ENCODE measurements at regions of chr7 and their contacts with region 1.

Region 1: GRCh38 chr7:140062528-140063299 is at the start of gene PARP12:
- DNase-seq: peak; percentile 77 to 86 (median 83)
- ATAC-seq: peak; percentile 91
- H3K4me3 ChIP-seq: peak within 1 kb of the TSS; percentile 79
- H3K4me3 Mint-ChIP-seq: peak within 1 kb of the TSS; percentile 79 to 94 (median 90)
- H3K27ac ChIP-seq: peak within 1 kb of the TSS; percentile 81
- H3K27ac Mint-ChIP-seq: peak within 1 kb of the TSS; percentile 83 to 95 (median 92)
- H3K4me1 ChIP-seq: peaks cover 32 to 38% of the 10 kb centered on the region in 2 donors
- H3K4me1 Mint-ChIP-seq: peaks cover 34 to 55% (median 48%) of the 10 kb centered on the region in 7 donors
- H3K27me3 ChIP-seq: no peaks in the 10 kb centered on the region
- H3K27me3 Mint-ChIP-seq: peaks cover 0 to 7% (median 0%) of the 10 kb centered on the region in 5 donors
- total RNA-seq, gene PARP12: 66.2 to 145 (median 94.5) TPM

Region 2: DNA sequence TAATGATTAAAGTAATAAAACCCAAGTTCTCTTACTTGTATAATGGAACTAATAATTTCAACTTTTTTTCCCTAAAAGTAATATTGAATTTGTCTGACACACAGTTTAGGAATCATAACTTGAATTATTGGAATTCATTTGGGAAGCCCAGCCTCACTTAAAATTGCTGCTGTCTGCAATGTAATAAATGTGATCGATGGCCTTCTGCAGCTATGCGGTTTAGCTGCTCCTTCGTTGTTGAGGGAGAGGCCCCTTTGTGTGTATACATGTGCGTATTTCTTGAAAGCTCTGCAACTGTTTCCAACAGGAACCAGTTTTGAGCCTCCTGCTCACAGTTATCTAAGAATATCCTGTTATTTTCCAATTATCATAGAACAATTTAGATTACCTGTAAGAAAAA is 1833.9 kb before region 1 on chr7:
- CTCF ChIA-PET with region 1: no interaction called
- POLR2A ChIA-PET with region 1: no interaction called
- intact Hi-C with region 1: no loop called
- DNase-seq: no peak
- ATAC-seq: no peak
- H3K4me3 ChIP-seq: no peak overlapping the region
- H3K4me3 Mint-ChIP-seq: no peak overlapping the region
- H3K27ac ChIP-seq: no peak overlapping the region
- H3K27ac Mint-ChIP-seq: no peak overlapping the region
- H3K4me1 ChIP-seq: no peaks in the 10 kb centered on the region
- H3K4me1 Mint-ChIP-seq: peaks cover 0 to 4% (median 0%) of the 10 kb centered on the region in 7 donors
- H3K27me3 ChIP-seq: no peaks in the 10 kb centered on the region
- H3K27me3 Mint-ChIP-seq: peaks cover 0 to 16% (median 12%) of the 10 kb centered on the region in 5 donors

Region 3: DNA sequence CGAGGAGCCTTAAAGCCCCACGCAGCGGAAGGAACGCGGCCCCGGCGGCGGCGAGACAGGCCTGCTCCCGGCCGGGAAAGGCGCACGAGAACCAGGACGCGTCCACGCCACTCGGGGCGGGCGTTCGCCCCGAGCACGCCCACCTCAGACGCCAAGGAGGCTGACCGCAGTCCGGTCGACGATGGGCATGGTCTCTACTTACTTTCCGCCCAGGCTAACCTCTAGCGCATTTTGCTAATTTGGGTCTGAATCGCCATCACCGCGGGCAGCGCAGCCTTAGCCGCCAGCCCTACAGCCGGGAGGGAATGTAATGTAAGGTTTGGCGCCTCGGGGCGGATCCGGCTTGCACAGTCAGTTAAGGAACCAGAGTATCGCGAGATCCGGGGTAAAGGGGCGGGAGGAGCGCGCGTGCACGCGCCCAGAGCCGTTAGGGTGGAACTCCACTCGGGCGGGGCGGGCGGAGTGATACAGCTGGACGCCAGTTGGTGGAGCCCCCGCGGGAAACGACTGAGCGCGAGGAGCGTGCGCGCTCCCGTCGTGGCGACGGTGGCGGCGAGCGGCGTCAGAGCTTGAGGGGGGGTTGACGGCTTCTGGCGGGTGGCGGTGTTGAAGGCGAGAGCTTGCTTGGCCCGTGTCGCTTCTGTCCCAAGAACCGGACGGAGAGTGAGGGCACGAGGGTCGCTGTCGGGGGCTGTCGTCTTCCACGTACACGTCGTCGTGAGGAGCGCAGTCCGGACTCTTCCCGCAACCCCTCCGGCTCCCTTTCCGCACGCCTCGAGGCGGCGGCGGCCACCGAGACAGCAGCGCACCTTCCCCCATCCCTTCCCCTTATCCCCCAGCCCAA is 703.1 kb before region 1 on chr7 and contains the start of gene LUC7L2:
- CTCF ChIA-PET with region 1: no interaction called
- POLR2A ChIA-PET with region 1: no interaction called
- intact Hi-C with region 1: loop called in 1 of 2 experiments (anchors 5 kb)
- DNase-seq: peak; percentile 96 to 100 (median 99)
- ATAC-seq: peak; percentile 91
- H3K4me3 ChIP-seq: peak within 1 kb of the TSS; percentile 80
- H3K4me3 Mint-ChIP-seq: peak within 1 kb of the TSS; percentile 93 to 100 (median 99)
- H3K27ac ChIP-seq: peak within 1 kb of the TSS; percentile 97
- H3K27ac Mint-ChIP-seq: peak within 1 kb of the TSS; percentile 95 to 100 (median 98)
- H3K4me1 ChIP-seq: peaks cover 10 to 27% of the 10 kb centered on the region in 2 donors
- H3K4me1 Mint-ChIP-seq: peaks cover 21 to 60% (median 45%) of the 10 kb centered on the region in 7 donors
- H3K27me3 ChIP-seq: no peaks in the 10 kb centered on the region
- H3K27me3 Mint-ChIP-seq: no peaks in the 10 kb centered on the region
- total RNA-seq, gene LUC7L2: 116 to 183 (median 150) TPM

Region 4: DNA sequence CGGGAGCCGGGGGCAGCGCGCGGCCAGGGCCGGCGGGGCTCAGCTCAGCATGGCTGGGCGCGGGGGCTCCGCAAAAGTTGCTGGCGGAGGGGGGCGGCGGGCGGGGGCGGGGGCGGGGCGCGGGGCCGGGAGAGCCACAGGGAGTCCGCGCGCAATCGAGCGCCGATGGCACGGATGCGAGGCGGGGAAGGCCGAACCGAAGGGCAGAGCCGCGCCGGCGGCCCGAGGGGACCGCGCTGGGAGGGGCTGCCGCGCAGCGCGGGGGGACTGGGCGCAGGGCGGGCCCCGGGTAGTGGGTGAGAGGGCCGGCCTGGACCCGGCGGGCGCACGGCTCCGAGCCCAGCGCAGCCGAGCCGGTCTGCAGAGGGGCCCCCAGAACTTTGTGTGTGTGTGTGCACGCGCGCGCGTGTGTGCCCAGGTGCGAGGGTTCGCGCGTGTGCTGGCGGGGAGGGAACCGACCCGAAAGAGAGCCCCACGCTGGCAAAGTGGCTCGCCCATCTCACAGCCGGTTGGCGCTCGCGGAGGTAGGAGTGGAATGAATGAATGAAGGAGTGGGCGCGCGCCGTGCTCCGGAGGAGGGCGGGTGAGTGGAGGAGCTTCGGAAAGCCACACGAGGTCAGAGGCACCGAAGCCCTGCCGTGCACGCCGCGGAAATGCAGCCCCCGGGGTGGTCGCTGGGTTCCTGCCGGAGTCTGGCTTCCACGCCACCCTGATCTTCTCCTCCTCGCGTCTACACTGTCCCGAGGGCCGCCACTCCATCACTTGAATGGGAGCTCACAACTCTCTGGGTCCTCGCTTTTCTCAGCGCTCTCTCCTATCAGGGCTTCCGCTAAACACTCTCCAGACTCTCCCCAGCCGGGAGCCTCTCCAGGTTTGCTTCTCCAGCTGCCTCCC is 284.5 kb before region 1 on chr7 and contains the start of gene HIPK2:
- CTCF ChIA-PET with region 1: no interaction called
- POLR2A ChIA-PET with region 1: no interaction called
- intact Hi-C with region 1: loop called in 1 of 2 experiments (anchors 1 kb)
- DNase-seq: peak; percentile 54 to 75 (median 67)
- ATAC-seq: peak; percentile 79
- H3K4me3 ChIP-seq: peak within 1 kb of the TSS; percentile 85
- H3K4me3 Mint-ChIP-seq: peak within 1 kb of the TSS; percentile 94 to 100 (median 98)
- H3K27ac ChIP-seq: peak within 1 kb of the TSS; percentile 89
- H3K27ac Mint-ChIP-seq: peak within 1 kb of the TSS; percentile 95 to 98 (median 97)
- H3K4me1 ChIP-seq: peaks cover 4 to 26% of the 10 kb centered on the region in 2 donors
- H3K4me1 Mint-ChIP-seq: peaks cover 41 to 53% (median 49%) of the 10 kb centered on the region in 7 donors
- H3K27me3 ChIP-seq: no peaks in the 10 kb centered on the region
- H3K27me3 Mint-ChIP-seq: peaks cover 0 to 24% (median 5%) of the 10 kb centered on the region in 5 donors
- total RNA-seq, gene HIPK2: 27.3 to 44.0 (median 37.3) TPM

Region 5: DNA sequence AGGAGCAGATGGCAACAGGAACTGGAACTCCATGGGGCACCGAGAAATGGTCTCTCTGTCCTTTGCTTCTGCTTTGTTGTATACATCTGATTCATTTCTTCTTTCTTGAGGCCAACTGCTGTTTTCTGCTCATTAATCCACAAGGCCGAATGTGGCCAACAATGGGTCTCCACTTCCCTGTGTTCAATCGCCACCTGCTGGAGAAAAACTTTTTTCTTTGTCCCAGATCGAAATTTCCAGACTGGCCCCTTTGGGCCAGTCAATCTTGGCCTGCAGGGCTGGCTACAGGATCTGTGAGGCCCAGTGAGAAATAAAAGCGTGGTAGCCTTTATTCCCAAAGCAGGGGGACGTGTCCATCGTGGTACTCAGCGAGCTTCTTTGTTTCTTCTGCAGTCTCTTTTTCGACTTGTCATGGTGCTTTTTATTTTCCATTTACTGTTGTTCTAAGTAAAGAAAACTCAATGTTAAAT is 58.8 kb before region 1 on chr7:
- CTCF ChIA-PET with region 1: no interaction called
- POLR2A ChIA-PET with region 1: no interaction called
- intact Hi-C with region 1: no loop called
- DNase-seq: peak in 7 of 9 donors; percentile 17 to 42 (median 33)
- ATAC-seq: peak; percentile 37
- H3K4me3 ChIP-seq: no peak overlapping the region
- H3K4me3 Mint-ChIP-seq: no peak overlapping the region
- H3K27ac ChIP-seq: no peak overlapping the region
- H3K27ac Mint-ChIP-seq: peak overlapping the region in 1 of 9 donors; percentile 80
- H3K4me1 ChIP-seq: no peaks in the 10 kb centered on the region
- H3K4me1 Mint-ChIP-seq: peaks cover 0 to 6% (median 0%) of the 10 kb centered on the region in 7 donors
- H3K27me3 ChIP-seq: no peaks in the 10 kb centered on the region
- H3K27me3 Mint-ChIP-seq: no peaks in the 10 kb centered on the region

Region 6: GRCh38 chr7:140022582-140023211 is 40.0 kb before region 1 on chr7:
- CTCF ChIA-PET with region 1: no interaction called
- POLR2A ChIA-PET with region 1: no interaction called
- intact Hi-C with region 1: no loop called
- DNase-seq: no peak
- ATAC-seq: no peak
- H3K4me3 ChIP-seq: no peak overlapping the region
- H3K4me3 Mint-ChIP-seq: no peak overlapping the region
- H3K27ac ChIP-seq: no peak overlapping the region
- H3K27ac Mint-ChIP-seq: peak overlapping the region in 2 of 9 donors; percentile 51 to 68
- H3K4me1 ChIP-seq: no peaks in the 10 kb centered on the region
- H3K4me1 Mint-ChIP-seq: peaks cover 0 to 2% (median 0%) of the 10 kb centered on the region in 7 donors
- H3K27me3 ChIP-seq: no peaks in the 10 kb centered on the region
- H3K27me3 Mint-ChIP-seq: no peaks in the 10 kb centered on the region

Region 7: GRCh38 chr7:140304191-140304799 is 241.6 kb after region 1 on chr7:
- CTCF ChIA-PET with region 1: no interaction called
- POLR2A ChIA-PET with region 1: no interaction called
- intact Hi-C with region 1: loop called (anchors 5 to 10 kb)
- DNase-seq: peak in 8 of 9 donors; percentile 30 to 75 (median 58)
- ATAC-seq: peak; percentile 93
- H3K4me3 ChIP-seq: no peak overlapping the region
- H3K4me3 Mint-ChIP-seq: peak overlapping the region in 1 of 10 donors; percentile 12
- H3K27ac ChIP-seq: no peak overlapping the region
- H3K27ac Mint-ChIP-seq: peak overlapping the region; percentile 3 to 81 (median 62)
- H3K4me1 ChIP-seq: no peaks in the 10 kb centered on the region
- H3K4me1 Mint-ChIP-seq: peaks cover 0 to 7% (median 6%) of the 10 kb centered on the region in 7 donors
- H3K27me3 ChIP-seq: no peaks in the 10 kb centered on the region
- H3K27me3 Mint-ChIP-seq: no peaks in the 10 kb centered on the region

Region 8: GRCh38 chr7:140342727-140343514 is 280.2 kb after region 1 on chr7:
- CTCF ChIA-PET with region 1: no interaction called
- POLR2A ChIA-PET with region 1: no interaction called
- intact Hi-C with region 1: no loop called
- DNase-seq: no peak
- ATAC-seq: peak; percentile 88
- H3K4me3 ChIP-seq: no peak overlapping the region
- H3K4me3 Mint-ChIP-seq: no peak overlapping the region
- H3K27ac ChIP-seq: no peak overlapping the region
- H3K27ac Mint-ChIP-seq: no peak overlapping the region
- H3K4me1 ChIP-seq: no peaks in the 10 kb centered on the region
- H3K4me1 Mint-ChIP-seq: peaks cover 0 to 2% (median 0%) of the 10 kb centered on the region in 7 donors
- H3K27me3 ChIP-seq: no peaks in the 10 kb centered on the region
- H3K27me3 Mint-ChIP-seq: no peaks in the 10 kb centered on the region

Region 9: GRCh38 chr7:140397784-140398750 is 335.4 kb after region 1 on chr7 and contains the start of gene SLC37A3:
- CTCF ChIA-PET with region 1: no interaction called
- POLR2A ChIA-PET with region 1: no interaction called
- intact Hi-C with region 1: loop called in 1 of 2 experiments (anchors 5 kb)
- DNase-seq: peak; percentile 74 to 93 (median 80)
- ATAC-seq: peak; percentile 97
- H3K4me3 ChIP-seq: peak within 1 kb of the TSS; percentile 67
- H3K4me3 Mint-ChIP-seq: peak within 1 kb of the TSS; percentile 79 to 95 (median 90)
- H3K27ac ChIP-seq: peak within 1 kb of the TSS; percentile 84
- H3K27ac Mint-ChIP-seq: peak within 1 kb of the TSS; percentile 14 to 92 (median 85)
- H3K4me1 ChIP-seq: peaks cover 0 to 15% of the 10 kb centered on the region in 2 donors
- H3K4me1 Mint-ChIP-seq: peaks cover 22 to 41% (median 31%) of the 10 kb centered on the region in 7 donors
- H3K27me3 ChIP-seq: no peaks in the 10 kb centered on the region
- H3K27me3 Mint-ChIP-seq: no peaks in the 10 kb centered on the region
- total RNA-seq, gene SLC37A3: 26.8 to 72.7 (median 39.4) TPM

Region 10: GRCh38 chr7:141551094-141551781 is 1488.5 kb after region 1 on chr7 and contains the start of gene AGK:
- CTCF ChIA-PET with region 1: no interaction called
- POLR2A ChIA-PET with region 1: no interaction called
- intact Hi-C with region 1: loop called in 1 of 2 experiments (anchors 10 kb)
- DNase-seq: peak; percentile 61 to 83 (median 74)
- ATAC-seq: peak; percentile 96
- H3K4me3 ChIP-seq: peak within 1 kb of the TSS; percentile 89
- H3K4me3 Mint-ChIP-seq: peak within 1 kb of the TSS; percentile 83 to 99 (median 92)
- H3K27ac ChIP-seq: peak within 1 kb of the TSS; percentile 73
- H3K27ac Mint-ChIP-seq: peak within 1 kb of the TSS; percentile 52 to 96 (median 90)
- H3K4me1 ChIP-seq: peaks cover 12 to 17% of the 10 kb centered on the region in 2 donors
- H3K4me1 Mint-ChIP-seq: peaks cover 14 to 44% (median 40%) of the 10 kb centered on the region in 7 donors
- H3K27me3 ChIP-seq: no peaks in the 10 kb centered on the region
- H3K27me3 Mint-ChIP-seq: peaks cover 0 to 4% (median 0%) of the 10 kb centered on the region in 5 donors
- total RNA-seq, gene AGK: 24.3 to 58.8 (median 29.9) TPM

Measured in naive thymus-derived CD4-positive, alpha-beta T cell (primary cell).